H1 (cell line): ENCODE measurements at regions of chr16 and their contacts with region 1.

Region 1: GRCh38 chr16:75110637-75111513 is 5.7 kb downstream of the LDHD start:
- DNase-seq: peak; percentile 83 to 91
- H3K4me3 ChIP-seq: peak overlapping the region in 1 of 4 experiments; percentile 31; a peak in 2 of 8 replicates
- H3K27ac ChIP-seq: no peak overlapping the region
- H3K4me1 ChIP-seq: peaks cover 9 to 52% (median 40%) of the 10 kb centered on the region in 4 experiments
- H3K27me3 ChIP-seq: no peaks in the 10 kb centered on the region
- CTCF ChIP-seq: peak; percentile 81 to 92 (median 92)
- EP300 ChIP-seq: no peak
- POLR2A ChIP-seq: no peak; a peak in 1 of 3 replicates
- RAD21 ChIP-seq: peak; percentile 88 to 95

Region 2: GRCh38 chr16:74998481-74999218 is 112.2 kb before region 1 on chr16 and contains the start of gene ZNRF1:
- CTCF ChIA-PET with region 1: interaction called, 171 read pairs
- POLR2A ChIA-PET with region 1: interaction called, 62 read pairs
- DNase-seq: peak; percentile 60 to 94
- H3K4me3 ChIP-seq: peak within 1 kb of the TSS; percentile 56 to 90 (median 70)
- H3K27ac ChIP-seq: peak within 1 kb of the TSS; percentile 67; the same call in 1 of the 2 replicates
- H3K4me1 ChIP-seq: peaks cover 2 to 15% (median 12%) of the 10 kb centered on the region in 4 experiments; a peak in 6 of 7 replicates
- H3K27me3 ChIP-seq: no peaks in the 10 kb centered on the region; a peak in 1 of 7 replicates
- CTCF ChIP-seq: peak; percentile 74 to 87 (median 80)
- EP300 ChIP-seq: no peak
- POLR2A ChIP-seq: peak; percentile 54 to 74
- RAD21 ChIP-seq: peak; percentile 83
- total RNA-seq, gene ZNRF1: 48.0 and 52.9 TPM in 2 replicates

Region 3: GRCh38 chr16:75064403-75065148 is 46.3 kb before region 1 on chr16:
- CTCF ChIA-PET with region 1: interaction called, 25 read pairs
- POLR2A ChIA-PET with region 1: interaction called, 3 read pairs
- DNase-seq: no peak
- H3K4me3 ChIP-seq: no peak overlapping the region
- H3K27ac ChIP-seq: no peak overlapping the region
- H3K4me1 ChIP-seq: peaks cover 4 to 16% (median 8%) of the 10 kb centered on the region in 4 experiments; a peak in 6 of 7 replicates
- H3K27me3 ChIP-seq: no peaks in the 10 kb centered on the region
- CTCF ChIP-seq: no peak
- EP300 ChIP-seq: no peak
- POLR2A ChIP-seq: no peak
- RAD21 ChIP-seq: no peak

Region 4: GRCh38 chr16:75087375-75087979 is 23.4 kb before region 1 on chr16:
- CTCF ChIA-PET with region 1: interaction called, 90 read pairs
- POLR2A ChIA-PET with region 1: interaction called, 6 read pairs
- DNase-seq: no peak
- H3K4me3 ChIP-seq: no peak overlapping the region
- H3K27ac ChIP-seq: no peak overlapping the region
- H3K4me1 ChIP-seq: peaks cover 0 to 17% (median 8%) of the 10 kb centered on the region in 4 experiments; a peak in 4 of 7 replicates
- H3K27me3 ChIP-seq: no peaks in the 10 kb centered on the region
- CTCF ChIP-seq: no peak
- EP300 ChIP-seq: no peak
- POLR2A ChIP-seq: no peak
- RAD21 ChIP-seq: peak in 1 of 2 experiments; percentile 21; a peak in 1 of 4 replicates

Region 5: DNA sequence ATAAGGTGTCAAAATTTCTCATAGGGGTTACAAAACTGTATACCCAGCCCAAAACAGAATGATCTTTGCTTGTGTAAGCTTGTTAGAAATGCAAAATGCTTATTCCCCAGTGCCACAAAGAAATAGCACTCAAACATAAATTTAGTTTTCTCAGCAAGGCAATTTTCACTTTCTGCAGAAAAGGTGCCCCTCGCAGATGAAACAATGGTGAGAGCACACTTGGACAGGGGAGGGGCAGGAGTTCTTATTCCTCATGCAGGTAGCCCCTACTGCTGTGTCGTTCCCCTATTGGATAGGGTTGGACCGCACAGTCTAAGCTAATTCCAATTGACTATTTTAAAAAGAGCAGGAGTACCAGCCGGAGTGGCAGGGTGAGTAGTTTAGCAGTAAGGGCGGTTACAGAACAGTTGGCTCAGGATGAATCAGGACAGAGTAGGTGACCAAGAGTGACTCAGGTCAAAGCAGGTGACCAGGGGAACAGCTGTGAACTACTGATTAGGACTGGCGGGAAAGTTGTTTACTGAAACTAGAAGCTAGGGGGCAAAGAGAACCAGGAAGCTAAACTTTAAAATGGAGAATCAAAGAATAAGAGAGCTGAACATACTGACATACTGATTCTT is 11.2 kb after region 1 on chr16:
- CTCF ChIA-PET with region 1: interaction called, 34 read pairs
- POLR2A ChIA-PET with region 1: interaction called, 37 read pairs
- DNase-seq: no peak
- H3K4me3 ChIP-seq: no peak overlapping the region
- H3K27ac ChIP-seq: no peak overlapping the region
- H3K4me1 ChIP-seq: peaks cover 4 to 9% (median 6%) of the 10 kb centered on the region in 4 experiments; a peak in 6 of 7 replicates
- H3K27me3 ChIP-seq: no peaks in the 10 kb centered on the region
- CTCF ChIP-seq: no peak
- EP300 ChIP-seq: no peak
- POLR2A ChIP-seq: no peak
- RAD21 ChIP-seq: no peak

Region 6: DNA sequence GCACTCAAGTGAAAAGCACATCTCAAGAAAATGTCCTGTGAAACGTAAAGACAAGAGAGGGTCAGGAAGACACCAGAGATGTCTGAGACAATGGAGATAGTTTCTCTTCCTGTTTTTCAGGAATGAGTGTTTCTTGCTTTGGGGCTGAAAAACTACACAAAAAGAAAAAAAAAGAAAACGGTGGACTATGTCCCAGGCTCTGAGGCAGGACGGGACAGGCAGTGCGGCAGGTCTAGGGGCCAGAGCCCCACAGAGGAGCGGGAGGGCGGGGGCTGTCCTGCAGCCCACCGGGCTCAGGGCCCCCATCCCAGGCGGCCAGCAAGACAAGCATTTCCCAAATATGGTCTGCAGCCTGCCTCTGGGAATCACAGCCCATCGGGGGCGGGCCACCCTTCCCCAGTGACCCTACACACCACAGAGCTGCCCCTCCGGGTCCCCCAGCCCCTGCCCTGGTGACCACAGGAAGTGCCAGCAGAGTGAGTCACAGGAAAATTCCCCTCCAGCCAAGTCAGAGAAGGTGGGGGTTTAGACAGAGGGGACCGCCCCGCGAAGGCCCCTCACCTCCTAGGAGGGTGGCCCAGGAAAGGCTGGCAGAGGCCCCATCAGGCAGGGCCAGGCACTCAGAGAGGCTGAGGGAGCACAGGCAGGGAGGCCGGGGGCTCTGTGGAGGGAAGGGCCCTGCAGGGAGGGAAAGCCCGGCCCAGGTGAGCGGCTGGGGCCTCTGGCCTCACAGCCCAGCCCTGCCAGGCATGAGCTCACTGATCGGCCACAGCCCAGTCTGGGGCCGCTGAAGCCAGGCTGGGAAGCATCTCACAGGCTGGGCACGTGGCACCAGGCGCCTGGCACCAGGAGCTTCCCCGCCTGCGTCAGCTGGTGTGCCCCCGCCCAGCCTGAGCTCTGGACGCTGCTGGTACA is 134.2 kb after region 1 on chr16:
- CTCF ChIA-PET with region 1: no interaction called
- POLR2A ChIA-PET with region 1: no interaction called
- DNase-seq: peak in 1 of 2 experiments; percentile 70
- H3K4me3 ChIP-seq: no peak overlapping the region
- H3K27ac ChIP-seq: peak overlapping the region; percentile 73
- H3K4me1 ChIP-seq: peaks cover 0 to 56% (median 43%) of the 10 kb centered on the region in 4 experiments; a peak in 6 of 7 replicates
- H3K27me3 ChIP-seq: no peaks in the 10 kb centered on the region
- CTCF ChIP-seq: 0 out of 4 replicates have a peak, but pooled peaks of 1 of the 3 experiments have one; percentile 5
- EP300 ChIP-seq: peak in 1 of 2 experiments; percentile 86; a peak in 2 of 3 replicates
- POLR2A ChIP-seq: peak in 1 of 2 experiments; percentile 77; a peak in 2 of 3 replicates
- RAD21 ChIP-seq: 0 out of 4 replicates have a peak, but pooled peaks of 1 of the 2 experiments have one; percentile 1